Mammary epithelial cell (primary cell): ENCODE measurements at regions of chr10 and their contacts with region 1.

Region 1: DNA sequence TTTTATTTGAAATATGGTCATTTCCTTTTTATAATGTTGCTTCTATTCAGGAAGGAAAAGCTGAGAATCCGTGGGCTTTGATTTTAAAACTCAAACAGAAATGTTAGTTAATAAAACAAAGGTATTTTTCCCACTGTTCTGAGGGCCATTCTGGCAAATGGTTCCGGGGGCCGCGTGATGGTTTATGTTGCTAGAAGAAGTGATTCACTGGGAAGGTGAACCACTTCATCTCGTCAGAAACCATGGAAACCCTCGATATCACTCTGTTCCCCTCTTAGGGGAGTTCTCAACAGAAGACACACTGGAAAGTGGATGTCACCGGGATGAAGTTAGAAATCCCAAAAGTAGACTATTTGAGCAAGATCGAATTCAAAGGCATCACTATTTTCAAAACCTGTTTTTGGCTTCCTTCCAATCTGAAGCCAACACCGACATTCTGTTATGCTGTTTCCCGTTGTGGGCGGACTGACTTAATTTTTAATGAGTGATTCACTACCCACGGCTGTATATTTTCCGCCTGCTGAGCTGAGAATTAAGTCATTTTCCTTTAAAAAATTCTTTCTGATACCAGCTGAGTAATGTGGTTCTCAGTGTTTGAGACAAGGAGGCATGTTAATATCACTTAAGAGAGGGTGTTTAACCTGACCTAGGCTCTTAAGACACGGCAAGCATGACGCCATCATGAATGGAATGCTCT is 84.1 kb downstream of the PTPRE start:
- DNase-seq: peak; percentile 91
- H3K4me3 ChIP-seq: no peak overlapping the region
- H3K27ac ChIP-seq: peak overlapping the region; percentile 76
- H3K4me1 ChIP-seq: peaks cover 39% of the 10 kb centered on the region
- H3K27me3 ChIP-seq: no peaks in the 10 kb centered on the region
- CTCF ChIP-seq: no peak

Region 2: DNA sequence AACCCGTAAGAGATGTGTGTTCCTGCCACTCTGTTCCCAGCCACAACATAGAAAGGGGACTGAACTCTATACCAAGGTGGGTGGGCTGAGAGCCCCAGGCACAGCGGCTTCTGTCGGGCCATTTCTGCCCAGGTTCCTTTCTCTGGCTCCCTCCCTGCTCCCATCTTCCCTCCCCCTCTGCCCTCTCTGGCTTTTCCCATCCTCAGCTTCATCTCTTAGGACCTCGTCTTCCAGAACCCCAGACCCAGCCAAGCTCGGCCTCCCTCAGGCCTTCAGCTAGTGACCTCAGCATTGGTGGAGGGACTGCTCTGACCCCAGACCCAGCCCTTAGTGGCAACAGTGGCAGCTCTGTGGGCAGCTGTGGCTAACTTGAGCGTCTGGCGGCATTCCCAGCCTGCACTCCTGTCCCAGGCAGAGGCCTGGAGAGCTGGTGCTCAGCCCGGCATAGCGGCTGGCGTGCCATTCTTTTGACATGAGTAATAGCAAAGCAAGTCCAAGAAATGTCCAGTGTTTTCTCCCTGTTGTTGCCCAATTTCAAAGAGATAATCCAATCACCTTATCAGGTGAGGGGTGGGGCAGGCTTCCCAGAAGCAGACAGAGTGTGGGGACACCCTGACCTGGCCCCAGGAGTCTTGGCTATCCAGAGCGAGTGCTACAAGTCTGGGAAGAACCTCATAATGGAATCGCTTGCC is 68.2 kb before region 1 on chr10:
- CTCF ChIA-PET with region 1: no interaction called
- dilution Hi-C with region 1: no loop called
- in situ Hi-C with region 1: no loop called
- intact Hi-C with region 1: loop called (anchors 2 kb)
- DNase-seq: peak; percentile 86
- H3K4me3 ChIP-seq: no peak overlapping the region
- H3K27ac ChIP-seq: no peak overlapping the region
- H3K4me1 ChIP-seq: peaks cover 20% of the 10 kb centered on the region
- H3K27me3 ChIP-seq: no peaks in the 10 kb centered on the region
- CTCF ChIP-seq: no peak

Region 3: DNA sequence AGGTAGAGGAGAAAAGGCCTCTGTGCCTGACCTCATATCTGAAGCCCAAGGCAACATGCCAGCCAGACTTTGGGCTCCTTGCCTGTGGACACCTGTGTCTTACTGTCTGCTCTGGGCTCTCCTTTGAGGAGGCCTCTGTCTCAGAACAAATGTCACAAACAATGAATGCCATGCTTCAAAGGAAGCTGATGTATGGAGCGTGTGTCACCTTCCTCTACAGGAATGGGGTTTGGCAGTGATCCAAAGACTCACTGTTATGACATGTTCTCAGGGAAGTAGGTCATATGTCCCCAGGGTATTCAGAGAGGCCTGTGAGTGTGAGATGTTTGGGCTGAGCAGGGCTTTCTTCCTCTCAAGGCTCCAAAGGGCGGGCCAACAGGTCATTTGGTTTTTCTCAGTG is 45.7 kb before region 1 on chr10:
- CTCF ChIA-PET with region 1: no interaction called
- dilution Hi-C with region 1: no loop called
- in situ Hi-C with region 1: no loop called
- intact Hi-C with region 1: loop called (anchors 2 kb)
- DNase-seq: peak; percentile 93
- H3K4me3 ChIP-seq: no peak overlapping the region
- H3K27ac ChIP-seq: no peak overlapping the region
- H3K4me1 ChIP-seq: peaks cover 30% of the 10 kb centered on the region
- H3K27me3 ChIP-seq: no peaks in the 10 kb centered on the region
- CTCF ChIP-seq: no peak